B cell (primary cell): ENCODE measurements at regions of chr12 and their contacts with region 1.

Region 1: GRCh38 chr12:89345830-89346740 is 6.2 kb downstream of the DUSP6 start:
- DNase-seq: peak; percentile 89
- ATAC-seq: peak; percentile 87
- H3K4me3 ChIP-seq: peak overlapping the region in 4 of 5 experiments; percentile 19 to 58 (median 38)
- H3K4me3 Mint-ChIP-seq: peak overlapping the region; percentile 80
- H3K27ac ChIP-seq: peak overlapping the region; percentile 29 to 43
- H3K27ac Mint-ChIP-seq: peak overlapping the region; percentile 47
- H3K4me1 ChIP-seq: peaks cover 53 to 55% of the 10 kb centered on the region in 2 donors
- H3K4me1 Mint-ChIP-seq: peaks cover 61% of the 10 kb centered on the region
- H3K27me3 ChIP-seq: no peaks in the 10 kb centered on the region
- H3K27me3 Mint-ChIP-seq: no peaks in the 10 kb centered on the region
- CTCF ChIP-seq: no peak

Region 2: GRCh38 chr12:88035271-88035906 is 1310.7 kb before region 1 on chr12:
- CTCF ChIA-PET with region 1: no interaction called
- POLR2A ChIA-PET with region 1: no interaction called
- intact Hi-C with region 1: loop called (anchors 5 kb)
- DNase-seq: peak; percentile 88
- ATAC-seq: peak; percentile 97
- H3K4me3 ChIP-seq: peak overlapping the region; percentile 62 to 93 (median 90)
- H3K4me3 Mint-ChIP-seq: peak overlapping the region; percentile 99
- H3K27ac ChIP-seq: peak overlapping the region; percentile 47 to 74
- H3K27ac Mint-ChIP-seq: peak overlapping the region; percentile 92
- H3K4me1 ChIP-seq: peaks cover 16 to 17% of the 10 kb centered on the region in 2 donors
- H3K4me1 Mint-ChIP-seq: peaks cover 30% of the 10 kb centered on the region
- H3K27me3 ChIP-seq: no peaks in the 10 kb centered on the region
- H3K27me3 Mint-ChIP-seq: no peaks in the 10 kb centered on the region
- CTCF ChIP-seq: no peak

Region 3: DNA sequence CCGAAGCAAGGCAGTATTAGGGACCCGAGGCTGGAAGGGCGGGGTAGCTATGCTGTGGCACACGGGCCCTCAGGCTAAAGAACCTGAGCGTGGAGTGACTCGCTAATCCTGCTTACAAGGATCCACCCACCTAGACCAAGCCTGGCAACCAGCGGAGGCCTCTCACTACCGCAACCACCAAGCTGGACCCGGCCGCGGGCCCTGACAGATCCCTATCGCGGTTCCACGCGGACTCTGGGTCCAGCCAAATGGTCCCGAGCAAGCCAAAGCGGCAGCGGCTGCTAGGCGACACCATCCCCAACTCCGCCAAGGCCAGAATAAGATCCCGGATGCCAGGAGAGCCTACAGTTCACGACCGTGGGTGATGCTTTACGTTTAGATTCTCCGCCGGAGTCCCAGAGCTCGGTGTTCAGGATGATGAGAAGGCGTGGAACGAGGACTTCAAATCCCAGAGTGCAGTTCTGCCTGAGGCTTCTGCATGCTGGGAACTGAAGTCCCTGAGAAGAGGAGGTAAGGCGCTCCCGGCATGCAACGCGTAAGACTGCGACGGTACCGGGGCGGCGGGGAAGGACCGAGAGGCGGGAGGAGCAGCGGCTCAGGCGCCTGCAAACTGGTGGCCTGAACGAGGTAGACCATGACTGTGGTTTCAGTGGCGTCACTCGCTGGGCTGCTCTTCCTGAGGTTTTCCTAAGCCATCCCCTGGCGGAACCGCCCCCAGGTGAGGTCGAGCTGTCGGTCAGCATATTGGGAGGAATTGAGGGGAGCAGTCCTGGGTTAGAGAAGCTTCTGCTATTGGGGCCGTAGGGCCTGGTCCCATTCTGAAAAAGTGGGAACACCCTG is 1204.1 kb before region 1 on chr12 and contains the starts of genes CEP290 and TMTC3:
- CTCF ChIA-PET with region 1: no interaction called
- POLR2A ChIA-PET with region 1: no interaction called
- intact Hi-C with region 1: loop called (anchors 5 kb)
- DNase-seq: peak; percentile 96
- ATAC-seq: peak; percentile 93
- H3K4me3 ChIP-seq: peak within 1 kb of the TSS; percentile 74 to 95 (median 82)
- H3K4me3 Mint-ChIP-seq: peak within 1 kb of the TSS; percentile 92
- H3K27ac ChIP-seq: peak within 1 kb of the TSS; percentile 74 to 79
- H3K27ac Mint-ChIP-seq: peak within 1 kb of the TSS; percentile 92
- H3K4me1 ChIP-seq: peaks cover 12% of the 10 kb centered on the region in 2 donors
- H3K4me1 Mint-ChIP-seq: peaks cover 27% of the 10 kb centered on the region
- H3K27me3 ChIP-seq: no peaks in the 10 kb centered on the region
- H3K27me3 Mint-ChIP-seq: no peaks in the 10 kb centered on the region
- CTCF ChIP-seq: no peak
- total RNA-seq, gene CEP290: 27.3 and 31.0 TPM in 2 replicates
- total RNA-seq, gene TMTC3: 8.9 and 10.1 TPM in 2 replicates

Region 4: DNA sequence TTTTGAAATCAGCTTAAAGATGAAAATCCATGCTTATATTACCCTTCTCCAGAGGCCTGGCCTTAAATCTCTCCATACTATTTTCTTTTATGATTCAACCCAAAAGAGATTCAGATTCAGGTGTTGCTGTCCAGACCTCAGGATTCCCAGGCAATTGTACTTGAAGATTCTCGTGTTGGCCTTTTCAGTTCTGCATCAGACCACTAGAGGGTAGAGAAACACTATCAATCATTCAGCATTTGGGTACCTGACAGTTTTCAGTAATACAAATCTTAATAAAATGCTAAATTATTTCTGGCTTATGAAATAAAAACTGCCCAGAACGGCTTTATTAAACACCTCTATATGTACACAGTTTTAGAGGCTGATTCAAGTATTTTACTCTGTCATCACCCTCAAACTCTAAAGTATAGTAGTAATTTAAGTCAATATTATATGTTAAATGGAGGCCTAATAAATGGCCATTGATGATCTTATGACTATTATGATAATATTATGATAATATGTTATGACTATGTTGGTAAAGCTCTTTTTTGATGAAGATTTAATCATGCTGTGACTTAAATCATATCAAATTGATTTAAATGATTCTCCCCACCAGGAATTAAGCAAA is 294.9 kb before region 1 on chr12:
- CTCF ChIA-PET with region 1: interaction called, 3 read pairs
- POLR2A ChIA-PET with region 1: no interaction called
- intact Hi-C with region 1: loop called (anchors 1 kb)
- DNase-seq: peak; percentile 74
- ATAC-seq: peak; percentile 53
- H3K4me3 ChIP-seq: no peak overlapping the region
- H3K4me3 Mint-ChIP-seq: no peak overlapping the region
- H3K27ac ChIP-seq: no peak overlapping the region
- H3K27ac Mint-ChIP-seq: no peak overlapping the region
- H3K4me1 ChIP-seq: no peaks in the 10 kb centered on the region
- H3K4me1 Mint-ChIP-seq: no peaks in the 10 kb centered on the region
- H3K27me3 ChIP-seq: no peaks in the 10 kb centered on the region
- H3K27me3 Mint-ChIP-seq: peaks cover 8% of the 10 kb centered on the region
- CTCF ChIP-seq: peak; percentile 88

Region 5: GRCh38 chr12:89166525-89166934 is 179.6 kb before region 1 on chr12:
- CTCF ChIA-PET with region 1: no interaction called
- POLR2A ChIA-PET with region 1: interaction called, 3 read pairs
- intact Hi-C with region 1: loop called (anchors 1 kb)
- DNase-seq: peak; percentile 93
- ATAC-seq: peak; percentile 83
- H3K4me3 ChIP-seq: peak overlapping the region in 1 of 5 experiments; percentile 21
- H3K4me3 Mint-ChIP-seq: peak overlapping the region; percentile 67
- H3K27ac ChIP-seq: peak overlapping the region; percentile 90 to 98
- H3K27ac Mint-ChIP-seq: peak overlapping the region; percentile 90
- H3K4me1 ChIP-seq: peaks cover 56 to 63% of the 10 kb centered on the region in 2 donors
- H3K4me1 Mint-ChIP-seq: peaks cover 31% of the 10 kb centered on the region
- H3K27me3 ChIP-seq: no peaks in the 10 kb centered on the region
- H3K27me3 Mint-ChIP-seq: no peaks in the 10 kb centered on the region
- CTCF ChIP-seq: no peak

Region 6: DNA sequence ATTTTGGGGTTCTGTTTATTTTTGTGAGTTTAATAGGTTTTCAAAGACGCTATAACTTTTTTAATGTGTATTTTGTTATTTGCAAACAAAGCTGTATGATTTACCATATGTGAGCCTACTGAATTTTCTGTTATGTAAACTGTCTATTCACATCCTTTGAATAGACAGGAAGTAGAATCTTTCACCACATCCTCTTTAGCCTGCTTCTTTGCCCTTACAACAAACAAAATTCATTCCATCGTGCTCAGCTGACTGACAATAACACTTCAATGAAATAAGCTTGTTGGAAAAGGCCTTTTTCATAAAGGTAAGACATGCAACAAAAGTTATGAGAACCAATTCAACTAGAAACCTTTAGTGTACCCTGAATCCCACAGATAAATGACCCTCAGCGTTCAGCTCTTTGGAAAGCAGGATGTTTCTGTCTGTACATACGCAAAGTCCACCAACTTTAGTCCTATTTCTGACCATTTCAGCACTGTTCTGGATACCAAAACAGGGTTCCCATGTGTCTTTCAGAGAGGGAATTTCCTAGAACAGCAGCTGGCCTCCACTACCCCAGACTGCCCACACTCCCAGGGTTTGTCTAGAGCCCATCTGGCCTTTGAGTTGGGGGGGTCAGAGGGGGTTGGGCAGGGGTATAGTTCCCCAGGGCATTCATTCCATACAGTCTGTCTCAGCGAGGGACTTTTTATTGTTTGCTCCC is 65.1 kb before region 1 on chr12:
- CTCF ChIA-PET with region 1: no interaction called
- POLR2A ChIA-PET with region 1: no interaction called
- intact Hi-C with region 1: loop called (anchors 5 kb)
- DNase-seq: peak; percentile 12
- ATAC-seq: no peak
- H3K4me3 ChIP-seq: no peak overlapping the region
- H3K4me3 Mint-ChIP-seq: peak overlapping the region; percentile 55
- H3K27ac ChIP-seq: peak overlapping the region in 1 of 2 donors; percentile 43
- H3K27ac Mint-ChIP-seq: no peak overlapping the region
- H3K4me1 ChIP-seq: peaks cover 7 to 12% of the 10 kb centered on the region in 2 donors
- H3K4me1 Mint-ChIP-seq: peaks cover 12% of the 10 kb centered on the region
- H3K27me3 ChIP-seq: no peaks in the 10 kb centered on the region
- H3K27me3 Mint-ChIP-seq: no peaks in the 10 kb centered on the region
- CTCF ChIP-seq: no peak

Region 7: DNA sequence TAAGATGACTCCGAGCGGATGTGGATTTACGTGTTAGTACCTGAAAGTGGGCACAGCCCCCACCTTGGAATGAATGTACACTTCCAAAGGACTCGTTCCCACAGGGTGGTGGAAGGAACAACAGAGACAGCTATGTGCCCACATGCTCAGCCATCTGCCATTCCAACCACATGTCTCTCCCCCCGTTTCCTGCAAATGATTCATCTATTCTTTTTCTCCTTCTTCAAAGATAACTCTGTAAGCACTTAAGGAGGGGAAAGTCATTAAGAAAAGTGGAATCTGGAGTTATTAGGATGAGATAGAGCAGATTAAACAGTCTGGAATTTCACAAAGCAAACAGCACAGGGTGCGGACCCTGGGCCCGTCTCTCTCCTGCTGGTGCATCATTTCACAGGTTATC is 24.8 kb after region 1 on chr12:
- CTCF ChIA-PET with region 1: no interaction called
- POLR2A ChIA-PET with region 1: no interaction called
- intact Hi-C with region 1: no loop called
- DNase-seq: no peak
- ATAC-seq: no peak
- H3K4me3 ChIP-seq: no peak overlapping the region
- H3K4me3 Mint-ChIP-seq: no peak overlapping the region
- H3K27ac ChIP-seq: no peak overlapping the region
- H3K27ac Mint-ChIP-seq: no peak overlapping the region
- H3K4me1 ChIP-seq: peaks cover 3 to 4% of the 10 kb centered on the region in 2 donors
- H3K4me1 Mint-ChIP-seq: peaks cover 5% of the 10 kb centered on the region
- H3K27me3 ChIP-seq: no peaks in the 10 kb centered on the region
- H3K27me3 Mint-ChIP-seq: no peaks in the 10 kb centered on the region
- CTCF ChIP-seq: no peak